GM12878 (cell line): ENCODE measurements at regions of chr1 and their contacts with region 1.

Region 1: DNA sequence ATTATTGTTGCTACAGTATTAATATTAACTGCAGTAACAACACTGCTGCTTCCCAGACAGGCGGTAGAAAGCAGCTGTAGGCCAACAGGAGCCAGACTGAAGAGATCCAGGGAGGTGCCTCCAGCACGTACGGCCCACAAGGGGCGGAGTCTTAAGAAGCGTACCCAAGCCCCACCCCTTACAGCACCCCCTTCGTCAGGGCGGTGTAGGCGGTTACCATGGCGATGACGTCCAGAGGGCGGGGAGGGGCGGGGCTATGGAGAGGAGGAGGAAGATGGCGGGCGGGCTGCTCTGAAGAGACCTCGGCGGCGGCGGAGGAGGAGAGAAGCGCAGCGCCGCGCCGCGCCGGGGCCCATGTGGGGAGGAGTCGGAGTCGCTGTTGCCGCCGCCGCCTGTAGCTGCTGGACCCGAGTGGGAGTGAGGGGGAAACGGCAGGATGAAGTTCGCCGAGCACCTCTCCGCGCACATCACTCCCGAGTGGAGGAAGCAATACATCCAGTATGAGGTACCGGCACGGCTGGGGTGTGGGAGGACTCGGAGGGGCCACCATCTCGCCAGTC is at the start of gene XPR1:
- DNase-seq: peak; percentile 95
- ATAC-seq: peak; percentile 96
- H3K4me3 ChIP-seq: peak within 1 kb of the TSS; percentile 89
- H3K27ac ChIP-seq: peak within 1 kb of the TSS; percentile 56
- H3K4me1 ChIP-seq: peaks cover 8% of the 10 kb centered on the region
- H3K27me3 ChIP-seq: no peaks in the 10 kb centered on the region
- CTCF ChIP-seq: peak; percentile 9 to 16 (median 10); a peak in 1 of 6 replicates
- EP300 ChIP-seq: no peak
- POLR2A ChIP-seq: peak; percentile 88
- RAD21 ChIP-seq: peak; percentile 26; the same call in 1 of the 2 replicates
- polyA plus RNA-seq, gene XPR1: 1.1 to 1.5 TPM

Region 2: DNA sequence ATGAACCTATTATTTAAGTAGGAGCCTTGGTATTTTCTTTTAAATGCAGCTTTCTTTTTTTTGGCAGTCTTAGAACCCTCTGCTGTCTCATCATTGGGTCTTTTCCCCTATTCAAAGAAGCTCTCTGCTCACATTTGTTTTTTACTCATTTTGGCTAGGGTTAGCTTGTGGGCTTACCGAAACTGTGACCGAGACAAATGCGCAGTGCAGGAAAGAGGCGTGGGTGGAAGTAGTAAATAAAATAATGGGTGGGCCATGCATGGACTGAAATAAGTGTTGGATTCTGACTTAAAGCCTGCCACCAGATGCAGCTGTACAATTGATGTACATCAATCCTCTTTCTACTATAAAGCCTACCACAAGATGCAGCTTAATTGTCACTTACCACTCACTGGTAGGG is 14.7 kb after region 1 on chr1:
- CTCF ChIA-PET with region 1: interaction called, 12 read pairs
- POLR2A ChIA-PET with region 1: interaction called, 6 read pairs
- RAD21 ChIA-PET with region 1: interaction called, 14 read pairs
- SMC1A ChIA-PET with region 1: interaction called, 20 read pairs
- in situ Hi-C with region 1: no loop called
- intact Hi-C with region 1: no loop called
- DNase-seq: peak; percentile 32
- ATAC-seq: peak; percentile 79
- H3K4me3 ChIP-seq: no peak overlapping the region
- H3K27ac ChIP-seq: no peak overlapping the region
- H3K4me1 ChIP-seq: no peaks in the 10 kb centered on the region
- H3K27me3 ChIP-seq: no peaks in the 10 kb centered on the region
- CTCF ChIP-seq: no peak
- EP300 ChIP-seq: no peak
- POLR2A ChIP-seq: no peak
- RAD21 ChIP-seq: no peak

Region 3: GRCh38 chr1:180778782-180779398 is 147.0 kb after region 1 on chr1:
- CTCF ChIA-PET with region 1: interaction called, 10 read pairs
- POLR2A ChIA-PET with region 1: no interaction called
- RAD21 ChIA-PET with region 1: no interaction called
- SMC1A ChIA-PET with region 1: interaction called, 3 read pairs
- in situ Hi-C with region 1: no loop called
- intact Hi-C with region 1: loop called (anchors 5 kb)
- DNase-seq: no peak
- ATAC-seq: peak; percentile 80
- H3K4me3 ChIP-seq: no peak overlapping the region
- H3K27ac ChIP-seq: no peak overlapping the region
- H3K4me1 ChIP-seq: no peaks in the 10 kb centered on the region
- H3K27me3 ChIP-seq: no peaks in the 10 kb centered on the region
- CTCF ChIP-seq: peak; percentile 45 to 60 (median 58)
- EP300 ChIP-seq: no peak
- POLR2A ChIP-seq: no peak
- RAD21 ChIP-seq: peak; percentile 56